ENCODE measurements at regions of chr9 and their contacts with region 1.

Region 1: GRCh38 chr9:69078581-69078980 is 43.0 kb downstream of the FXN start:
- DNase-seq: peak in 1 of 2 donors; percentile 29
- H3K4me3 ChIP-seq: no peak overlapping the region
- CTCF ChIP-seq: no peak
- POLR2A ChIP-seq: no peak

Region 2: DNA sequence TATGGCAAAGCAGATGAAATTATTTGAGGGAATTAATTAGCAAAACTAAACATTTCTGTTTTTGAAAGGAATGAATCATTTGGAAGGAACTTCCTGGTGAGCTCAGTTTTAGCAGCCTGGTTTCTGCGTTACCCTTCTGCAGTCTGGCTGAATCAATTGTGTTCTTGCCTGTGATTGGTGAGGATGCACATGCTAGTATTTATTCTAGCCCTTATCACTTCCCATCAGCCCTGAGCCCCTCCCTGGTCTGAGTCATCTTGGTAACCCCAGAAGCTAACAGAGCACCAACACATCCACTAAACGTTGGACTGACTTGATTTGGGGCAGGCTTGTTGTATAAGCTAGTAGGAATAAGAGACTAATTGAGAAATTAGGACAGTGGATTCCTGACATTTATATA is 102.1 kb after region 1 on chr9:
- intact Hi-C with region 1: loop called (anchors 10 kb)
- DNase-seq: peak in 1 of 2 donors; percentile 67
- H3K4me3 ChIP-seq: no peak overlapping the region
- CTCF ChIP-seq: no peak
- POLR2A ChIP-seq: no peak

Region 3: DNA sequence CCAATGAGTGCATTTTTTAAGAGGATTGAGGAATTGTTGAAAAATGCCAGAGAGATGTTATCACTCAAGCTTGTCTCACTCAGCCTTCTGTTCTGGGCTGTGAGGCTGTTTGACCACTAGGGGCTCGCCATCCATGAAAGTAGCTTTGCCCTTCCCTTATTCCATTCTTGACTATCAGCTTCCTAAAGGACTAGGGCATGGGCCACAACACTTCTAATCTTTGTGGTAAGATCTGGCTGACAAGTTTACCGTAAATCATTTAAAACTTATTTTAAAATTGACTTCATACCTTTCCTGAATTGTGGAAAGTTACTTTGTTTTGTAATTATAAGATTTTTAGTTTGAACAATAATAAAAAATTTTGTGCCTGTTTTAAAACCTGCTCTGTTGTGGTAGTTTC is 145.0 kb after region 1 on chr9:
- intact Hi-C with region 1: no loop called
- DNase-seq: no peak
- H3K4me3 ChIP-seq: no peak overlapping the region
- CTCF ChIP-seq: no peak
- POLR2A ChIP-seq: no peak

Measured in lower leg skin (tissue), 4 donors.